ENCODE measurements at regions of chr2 and their contacts with region 1.

Region 1: GRCh38 chr2:68309426-68309825 is 10.3 kb downstream of the CNRIP1 start:
- DNase-seq: no peak
- H3K4me3 ChIP-seq: no peak overlapping the region
- H3K27ac ChIP-seq: no peak overlapping the region
- H3K4me1 ChIP-seq: no peaks in the 10 kb centered on the region
- CTCF ChIP-seq: no peak

Region 2: GRCh38 chr2:68172990-68173700 is 136.3 kb before region 1 on chr2:
- CTCF ChIA-PET with region 1: no interaction called
- POLR2A ChIA-PET with region 1: no interaction called
- intact Hi-C with region 1: no loop called
- DNase-seq: no peak
- H3K4me3 ChIP-seq: no peak overlapping the region
- H3K27ac ChIP-seq: no peak overlapping the region
- H3K4me1 ChIP-seq: peaks cover 7% of the 10 kb centered on the region
- CTCF ChIP-seq: no peak

Region 3: GRCh38 chr2:68295516-68295915 is 13.9 kb before region 1 on chr2:
- CTCF ChIA-PET with region 1: no interaction called
- POLR2A ChIA-PET with region 1: interaction called, 14 read pairs
- intact Hi-C with region 1: no loop called
- DNase-seq: peak; percentile 56
- H3K4me3 ChIP-seq: no peak overlapping the region
- H3K27ac ChIP-seq: no peak overlapping the region
- H3K4me1 ChIP-seq: peaks cover 24% of the 10 kb centered on the region
- CTCF ChIP-seq: no peak